T-cell (primary cell): ENCODE measurements at regions of chr15 and their contacts with region 1.

Region 1: GRCh38 chr15:90177012-90177411 is 24.1 kb upstream of the SEMA4B start:
- DNase-seq: no peak
- ATAC-seq: no peak
- H3K4me3 ChIP-seq: no peak overlapping the region
- H3K4me3 Mint-ChIP-seq: no peak overlapping the region
- H3K27ac ChIP-seq: no peak overlapping the region
- H3K27ac Mint-ChIP-seq: no peak overlapping the region
- H3K4me1 ChIP-seq: peaks cover 0 to 8% of the 10 kb centered on the region in 2 experiments
- H3K4me1 Mint-ChIP-seq: peaks cover 8 to 16% (median 14%) of the 10 kb centered on the region in 3 donors
- H3K27me3 ChIP-seq: peaks cover 0 to 3% of the 10 kb centered on the region in 2 experiments
- H3K27me3 Mint-ChIP-seq: peaks cover 0 to 5% of the 10 kb centered on the region in 2 donors

Region 2: DNA sequence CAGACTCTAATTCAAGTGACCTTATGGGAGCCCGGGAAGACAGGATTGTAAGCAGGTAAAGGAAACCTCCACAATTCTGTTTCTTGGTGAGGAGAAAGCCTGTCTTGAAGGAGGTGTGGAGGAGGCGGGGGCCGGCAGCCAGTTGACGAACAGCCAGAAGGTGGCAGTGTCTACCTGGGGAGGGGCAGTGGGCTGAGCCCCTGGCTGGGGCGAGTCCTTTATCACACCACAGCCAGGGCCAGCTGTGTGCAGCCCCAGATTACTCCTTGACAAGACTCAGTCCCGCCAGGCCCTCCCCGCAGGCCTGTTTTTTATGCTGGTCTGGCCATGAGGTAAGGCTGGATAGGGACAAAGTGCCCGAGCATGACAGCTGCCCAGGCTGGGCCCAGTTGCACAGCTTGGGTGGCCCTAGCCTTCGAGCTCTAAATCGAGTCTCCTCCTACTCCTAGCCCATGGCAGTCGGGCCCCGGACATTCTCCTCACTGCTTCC is 33.8 kb before region 1 on chr15:
- CTCF ChIA-PET with region 1: no interaction called
- POLR2A ChIA-PET with region 1: no interaction called
- DNase-seq: peak; percentile 12 to 71 (median 50)
- ATAC-seq: peak; percentile 79 to 85 (median 83)
- H3K4me3 ChIP-seq: no peak overlapping the region
- H3K4me3 Mint-ChIP-seq: peak overlapping the region; percentile 24 to 43 (median 40)
- H3K27ac ChIP-seq: no peak overlapping the region
- H3K27ac Mint-ChIP-seq: no peak overlapping the region
- H3K4me1 ChIP-seq: peaks cover 5 to 21% of the 10 kb centered on the region in 2 experiments
- H3K4me1 Mint-ChIP-seq: peaks cover 24 to 29% (median 28%) of the 10 kb centered on the region in 3 donors
- H3K27me3 ChIP-seq: no peaks in the 10 kb centered on the region
- H3K27me3 Mint-ChIP-seq: no peaks in the 10 kb centered on the region

Region 3: GRCh38 chr15:91845720-91846119 is 1668.7 kb after region 1 on chr15:
- CTCF ChIA-PET with region 1: no interaction called
- POLR2A ChIA-PET with region 1: interaction called in 1 of 2 experiments, 23 read pairs
- DNase-seq: no peak
- ATAC-seq: no peak
- H3K4me3 ChIP-seq: no peak overlapping the region
- H3K4me3 Mint-ChIP-seq: no peak overlapping the region
- H3K27ac ChIP-seq: no peak overlapping the region
- H3K27ac Mint-ChIP-seq: no peak overlapping the region
- H3K4me1 ChIP-seq: peaks cover 5 to 7% of the 10 kb centered on the region in 2 experiments
- H3K4me1 Mint-ChIP-seq: peaks cover 9 to 18% (median 13%) of the 10 kb centered on the region in 3 donors
- H3K27me3 ChIP-seq: peaks cover 0 to 13% of the 10 kb centered on the region in 2 experiments
- H3K27me3 Mint-ChIP-seq: peaks cover 16 to 21% of the 10 kb centered on the region in 2 donors